ENCODE measurements at regions of chr9 and their contacts with region 1.

Region 1: DNA sequence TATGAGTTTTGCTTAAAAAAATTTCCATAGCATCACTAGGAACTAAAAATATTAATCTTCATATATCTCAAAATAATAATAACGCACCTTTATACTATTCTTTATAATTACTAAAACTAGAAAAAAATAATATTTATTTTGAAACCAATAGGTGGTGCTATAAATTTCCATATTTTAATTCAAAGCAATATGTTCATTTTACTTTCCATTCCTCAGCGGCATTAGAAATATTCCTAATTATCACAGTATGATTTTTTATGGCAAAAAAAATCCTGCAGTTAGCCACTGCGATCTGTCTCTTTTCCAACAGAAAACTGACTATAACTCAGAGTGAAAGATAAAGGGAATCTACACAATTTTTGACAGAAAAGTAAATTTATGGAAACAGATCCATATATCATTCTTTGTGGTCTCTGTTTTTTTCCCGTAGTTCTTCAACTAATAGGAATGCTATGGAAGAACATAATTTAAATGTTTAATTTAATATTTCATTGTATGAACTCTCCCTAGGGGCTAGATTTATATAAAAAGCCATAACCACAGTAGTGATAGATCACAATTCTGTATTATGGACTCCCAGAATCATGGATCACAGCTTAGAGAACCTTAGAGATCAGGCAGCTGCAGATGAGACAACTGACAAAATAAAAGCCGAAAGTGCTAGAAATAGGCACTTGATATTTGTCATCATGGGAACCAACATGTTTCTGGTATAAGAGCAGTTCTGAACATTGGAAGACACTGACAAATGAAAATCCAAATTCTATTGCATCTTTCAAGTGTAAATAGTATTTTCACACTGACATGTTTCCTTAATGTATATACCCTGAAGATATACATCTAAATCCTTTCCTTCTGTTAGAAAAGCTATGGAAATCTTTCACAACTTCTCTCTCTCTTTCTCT is 167.7 kb upstream of the MPDZ start:
- DNase-seq: no peak
- ATAC-seq: no peak

Region 2: GRCh38 chr9:13568841-13569601 is 121.8 kb after region 1 on chr9:
- intact Hi-C with region 1: loop called (anchors 5 kb)
- DNase-seq: no peak
- ATAC-seq: no peak

Region 3: DNA sequence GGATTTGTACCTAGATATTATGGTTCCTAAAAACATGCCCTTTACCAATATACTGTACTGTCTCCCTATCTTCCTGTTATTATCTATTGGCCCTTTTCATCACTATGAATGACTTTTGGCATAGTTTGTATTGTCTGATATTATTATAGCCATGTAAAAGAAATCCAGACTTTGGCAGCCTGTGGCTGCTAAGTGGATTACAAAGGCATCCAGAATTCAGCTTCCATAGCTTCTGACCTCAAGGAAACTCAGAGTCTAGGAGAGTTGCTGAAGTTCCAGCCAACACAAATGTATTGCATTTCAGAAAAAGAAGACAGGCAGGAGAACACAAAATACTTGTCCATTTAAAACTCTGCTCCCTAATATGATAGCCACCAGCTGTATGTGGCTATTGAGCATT is 151.5 kb after region 1 on chr9:
- intact Hi-C with region 1: loop called (anchors 10 kb)
- DNase-seq: no peak
- ATAC-seq: peak; percentile 68

Region 4: GRCh38 chr9:13688994-13689600 is 241.9 kb after region 1 on chr9:
- intact Hi-C with region 1: loop called (anchors 5 kb)
- DNase-seq: no peak
- ATAC-seq: no peak

Region 5: DNA sequence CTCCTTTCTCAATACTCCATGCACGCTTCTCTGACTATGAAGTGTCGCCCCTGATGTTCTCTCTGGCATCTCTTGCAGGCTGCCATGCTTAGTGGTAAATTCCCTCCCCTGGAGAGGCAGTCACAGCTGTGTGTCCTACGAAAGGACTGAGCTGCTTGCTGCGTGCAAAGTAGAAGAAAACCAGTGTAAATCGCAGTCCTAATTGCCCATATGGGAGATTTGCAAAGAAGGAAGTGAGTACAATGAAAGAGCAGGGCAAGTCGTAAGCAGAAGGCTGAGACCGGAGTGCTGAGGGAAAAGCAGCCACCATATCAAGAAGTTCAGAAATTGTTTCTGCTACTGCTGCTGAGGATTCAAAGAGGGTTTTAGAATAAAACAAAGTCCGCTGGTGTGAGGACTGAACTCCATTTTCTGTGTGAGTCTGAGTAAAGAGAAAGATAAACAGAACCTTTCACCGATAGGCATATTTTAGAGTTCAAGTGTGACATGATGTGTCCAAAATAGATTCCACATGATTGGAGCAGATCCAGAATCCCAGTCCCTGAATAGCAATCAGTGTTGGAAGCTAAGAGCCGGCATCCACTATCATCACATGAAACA is 340.1 kb after region 1 on chr9:
- intact Hi-C with region 1: loop called (anchors 10 kb)
- DNase-seq: no peak
- ATAC-seq: peak; percentile 82

Region 6: DNA sequence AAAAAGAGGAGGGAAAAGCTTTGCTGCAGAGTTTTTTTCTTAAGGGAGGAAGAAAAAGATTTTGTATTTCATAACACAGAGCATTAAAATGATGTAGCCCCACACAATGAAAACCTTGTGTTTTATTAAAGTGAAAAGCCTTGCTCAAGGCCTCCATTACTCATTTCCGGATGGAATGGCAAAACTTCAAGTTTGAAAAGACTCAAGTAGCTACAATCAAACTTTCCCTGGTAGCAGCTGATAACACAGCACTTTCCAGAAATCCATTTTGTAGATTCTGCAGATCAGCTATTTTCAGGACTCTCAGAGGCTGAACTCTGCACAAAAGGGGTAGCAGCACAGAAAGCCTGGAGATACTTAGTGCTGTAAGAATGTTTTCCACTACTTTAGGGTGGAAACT is 491.9 kb after region 1 on chr9:
- intact Hi-C with region 1: loop called (anchors 10 kb)
- DNase-seq: no peak
- ATAC-seq: peak; percentile 85

Region 7: GRCh38 chr9:14096258-14096922 is 649.2 kb after region 1 on chr9:
- intact Hi-C with region 1: loop called (anchors 10 kb)
- DNase-seq: no peak
- ATAC-seq: peak; percentile 75